ENCODE measurements at regions of chr3 and their contacts with region 1.

Region 1: GRCh38 chr3:72380193-72380592 is 468.1 kb downstream of the SHQ1 start:
- DNase-seq: peak in 12 of 42 donors; percentile 18 to 71 (median 32)

Region 2: DNA sequence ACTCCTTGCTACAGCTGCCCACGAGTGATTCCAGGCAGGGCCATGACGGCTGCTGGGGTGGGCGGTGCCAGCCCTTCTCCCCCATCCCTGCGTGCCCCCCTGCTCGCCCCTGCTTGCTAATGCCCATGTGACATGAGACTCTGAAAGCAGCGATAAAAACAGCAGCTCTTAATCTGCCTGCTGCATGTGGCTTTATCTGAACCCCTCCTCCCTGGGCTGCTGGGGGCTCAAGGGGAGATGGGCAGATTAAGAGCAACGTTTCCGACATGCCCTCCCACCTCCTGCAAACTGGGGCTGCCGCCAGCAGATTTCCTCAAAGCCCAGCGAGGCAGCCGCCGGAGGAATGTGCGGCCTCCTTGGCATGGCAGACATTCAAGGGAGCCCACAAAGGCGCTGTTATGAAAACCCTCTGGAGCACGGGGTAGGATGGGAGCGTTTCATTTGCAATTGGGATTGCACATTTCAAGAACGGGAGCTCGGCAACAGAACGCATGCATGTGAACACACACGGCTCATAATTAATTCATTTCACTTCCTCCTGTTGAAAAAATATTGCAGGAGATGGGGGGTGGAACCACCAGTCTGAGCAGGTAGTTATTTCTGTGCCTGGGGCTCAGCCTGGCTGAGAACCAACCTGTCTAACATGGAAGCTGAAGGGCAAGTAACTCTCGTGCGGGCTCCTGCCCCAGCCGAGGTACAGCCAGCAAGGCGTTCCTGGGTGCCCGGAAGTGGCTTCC is 91.1 kb before region 1 on chr3:
- intact Hi-C with region 1: loop called (anchors 5 kb)
- DNase-seq: peak; percentile 64 to 92 (median 82)